Posterior cingulate gyrus (tissue), 11 donors: ENCODE measurements at regions of chr15 and their contacts with region 1.

Region 1: DNA sequence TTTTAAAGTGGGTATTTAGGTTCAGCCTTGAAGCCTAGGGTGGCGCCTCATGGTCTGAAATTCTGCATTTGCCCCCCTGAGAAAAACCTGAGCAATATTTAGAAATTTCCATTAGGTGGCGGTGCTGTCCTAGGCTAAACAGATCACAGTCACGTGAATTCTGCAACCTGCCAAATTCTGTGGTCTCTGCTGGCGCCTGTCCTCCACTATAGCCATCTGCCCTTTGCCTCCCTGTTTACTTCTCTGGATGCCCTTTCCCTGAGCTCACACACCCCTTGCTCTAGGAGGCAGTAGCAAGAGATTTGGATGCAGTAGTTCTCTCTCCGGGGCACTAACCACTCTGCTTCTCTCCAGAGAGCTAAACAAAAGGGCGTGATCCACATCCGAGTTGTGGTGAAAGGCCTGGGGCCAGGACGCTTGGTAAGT is 9.1 kb downstream of the MRPS11 start:
- DNase-seq: peak in 2 of 10 donors; percentile 52 to 87

Region 2: DNA sequence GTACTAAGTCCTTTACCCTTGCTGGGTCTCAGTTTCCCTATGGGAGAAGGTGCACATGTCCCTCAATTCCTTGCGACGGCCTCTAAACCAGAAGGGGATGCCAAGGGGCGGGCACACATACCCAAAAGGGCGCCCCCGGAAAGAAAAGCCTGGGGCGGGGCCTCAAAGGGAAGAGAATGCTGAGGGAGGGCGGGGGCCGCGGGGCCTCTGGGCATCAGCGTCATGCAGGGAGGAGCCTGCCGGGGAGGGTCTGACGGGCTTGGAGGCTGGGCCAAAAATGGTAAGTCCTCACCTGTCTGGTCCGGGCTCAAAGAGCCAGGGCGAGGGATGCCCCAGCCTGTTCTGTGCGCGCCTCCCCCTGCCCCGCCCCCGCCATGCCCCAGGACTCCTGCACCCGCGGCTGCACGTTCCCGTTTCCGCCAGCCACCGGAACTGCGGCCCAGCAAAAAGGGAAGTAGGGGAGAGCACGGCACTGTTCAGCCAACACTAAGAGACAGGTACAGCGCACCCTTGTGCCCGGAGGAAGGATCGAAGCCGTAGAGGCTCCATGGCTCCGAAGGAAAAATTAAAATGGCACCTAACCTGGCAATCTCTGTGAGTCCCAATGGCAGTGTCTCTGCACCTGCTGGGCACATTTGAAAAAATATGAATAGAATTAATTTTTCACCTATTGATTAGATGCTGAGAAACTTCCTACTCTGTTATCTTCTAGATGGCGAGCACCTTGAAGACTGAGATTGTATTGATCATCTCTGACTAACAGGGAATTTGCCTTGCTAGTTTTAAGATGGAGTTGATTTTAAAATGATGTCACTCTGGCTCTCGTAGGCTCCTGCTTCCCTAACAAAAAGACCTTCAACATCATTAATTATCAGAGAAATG is 69.8 kb after region 1 on chr15 and contains the start of gene DET1:
- intact Hi-C with region 1: loop called (anchors 5 kb)
- DNase-seq: peak; percentile 93 to 99 (median 96)

Region 3: DNA sequence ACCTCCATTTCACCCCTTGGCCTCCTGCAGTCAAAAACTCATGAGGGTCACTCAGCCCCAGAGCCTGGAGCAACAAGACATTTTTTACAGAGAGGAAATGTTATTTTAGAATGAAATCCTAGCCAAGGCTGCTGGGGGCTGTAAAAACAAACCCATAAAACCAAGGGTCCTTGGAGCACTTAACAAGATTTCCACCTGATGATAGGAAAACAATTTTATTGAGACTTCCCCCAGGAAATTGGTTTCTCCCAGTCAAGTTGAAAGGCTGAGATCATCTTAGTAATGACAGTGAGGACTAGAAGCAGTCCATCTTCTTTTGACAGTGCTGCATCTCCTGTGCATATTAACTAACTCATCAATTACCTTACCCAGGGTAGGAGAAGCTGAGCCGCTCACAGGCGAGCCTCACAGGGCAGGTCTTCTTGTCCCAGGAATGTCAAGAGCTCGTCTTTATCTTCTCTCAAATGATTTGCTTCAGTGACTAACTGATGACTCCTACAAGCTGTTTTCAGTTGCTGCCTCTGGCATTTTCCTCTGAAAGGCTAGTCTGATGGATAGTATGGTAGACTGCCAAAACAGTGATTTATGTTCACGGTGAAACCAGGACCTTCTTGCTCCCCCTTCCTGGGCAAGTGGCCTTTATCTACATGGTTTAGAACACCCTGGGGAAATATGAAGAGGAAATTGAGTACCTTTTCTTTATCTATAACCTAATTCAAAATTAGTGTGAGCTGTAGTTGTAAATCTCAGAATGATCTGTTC is 109.9 kb after region 1 on chr15:
- intact Hi-C with region 1: no loop called
- DNase-seq: peak in 1 of 10 donors; percentile 59

Region 4: GRCh38 chr15:88605189-88606069 is 128.8 kb after region 1 on chr15:
- intact Hi-C with region 1: loop called (anchors 5 kb)
- DNase-seq: peak in 6 of 10 donors; percentile 40 to 88 (median 64)

Region 5: GRCh38 chr15:88620995-88621772 is 144.5 kb after region 1 on chr15 and contains the start of gene AEN:
- intact Hi-C with region 1: loop called (anchors 5 kb)
- DNase-seq: peak; percentile 91 to 100 (median 96)

Region 6: GRCh38 chr15:88664151-88664778 is 187.6 kb after region 1 on chr15:
- intact Hi-C with region 1: loop called (anchors 5 kb)
- DNase-seq: peak in 3 of 10 donors; percentile 23 to 67 (median 60)

Region 7: GRCh38 chr15:88701561-88702095 is 225.0 kb after region 1 on chr15:
- intact Hi-C with region 1: no loop called
- DNase-seq: peak in 1 of 10 donors; percentile 18

Region 8: DNA sequence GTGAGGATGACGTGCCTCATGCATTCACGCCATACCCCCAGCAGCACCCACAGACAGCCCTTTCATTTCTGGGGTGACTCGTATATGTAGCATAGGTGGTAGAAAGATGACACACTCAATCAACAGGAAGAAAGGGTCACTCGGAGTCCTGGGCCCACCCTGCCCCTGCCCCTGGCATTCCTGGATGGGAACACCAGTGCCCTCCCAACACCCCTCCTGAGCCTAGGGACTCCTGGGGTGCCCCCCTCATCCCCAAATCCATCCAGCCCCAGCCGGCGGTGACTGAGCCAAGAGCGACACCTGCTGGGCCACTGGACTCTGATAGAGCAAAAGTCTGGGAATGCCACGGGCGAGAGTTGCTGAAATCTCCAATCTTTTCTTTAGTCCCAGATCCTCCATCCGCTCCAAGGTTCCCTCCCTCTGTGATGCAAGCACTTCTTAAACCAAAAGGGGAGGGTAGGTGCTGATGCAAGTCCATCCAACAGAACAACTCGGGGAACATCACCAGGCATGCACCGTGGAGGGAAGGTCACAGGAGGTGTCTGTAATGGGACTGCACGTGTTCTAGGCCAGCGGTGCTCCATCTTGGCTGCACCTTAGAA is 357.7 kb after region 1 on chr15:
- intact Hi-C with region 1: loop called (anchors 2 kb)
- DNase-seq: peak in 9 of 10 donors; percentile 46 to 94 (median 74)